Esophagus muscularis mucosa (tissue), 4 donors: ENCODE measurements at regions of chr1 and their contacts with region 1.

Region 1: GRCh38 chr1:43073490-43074230 is 98.4 kb downstream of the EBNA1BP2 start:
- DNase-seq: no peak
- H3K4me3 ChIP-seq: no peak overlapping the region
- H3K27ac ChIP-seq: no peak overlapping the region
- H3K4me1 ChIP-seq: peaks cover under 1 to 16% (median 4%) of the 10 kb centered on the region in 4 donors
- H3K27me3 ChIP-seq: peaks cover 0 to under 1% (median 0%) of the 10 kb centered on the region in 4 donors
- CTCF ChIP-seq: peak; percentile 85 to 94 (median 91)
- EP300 ChIP-seq: no peak
- POLR2A ChIP-seq: no peak

Region 2: DNA sequence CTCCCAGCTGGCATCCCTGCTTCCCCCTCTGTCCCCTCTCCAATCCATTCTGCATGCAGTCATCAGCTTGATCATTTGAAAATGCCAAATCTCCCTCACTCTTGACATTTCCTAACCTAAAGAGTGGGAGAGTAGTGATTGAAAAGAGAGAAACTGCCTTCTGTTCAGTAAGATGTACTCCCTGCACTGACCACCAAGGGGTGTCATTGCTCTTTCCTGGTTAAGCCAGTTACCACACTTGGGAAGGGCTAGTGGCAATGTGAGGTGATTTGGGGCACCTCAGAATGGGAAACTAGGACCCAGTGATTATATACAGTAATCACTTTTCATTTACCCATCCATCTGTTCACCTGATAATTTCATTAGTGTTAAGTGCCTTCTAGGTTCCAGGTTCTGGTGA is 295.8 kb before region 1 on chr1:
- intact Hi-C with region 1: loop called (anchors 5 kb)
- DNase-seq: no peak
- H3K4me3 ChIP-seq: no peak overlapping the region
- H3K27ac ChIP-seq: no peak overlapping the region
- H3K4me1 ChIP-seq: no peaks in the 10 kb centered on the region
- H3K27me3 ChIP-seq: no peaks in the 10 kb centered on the region
- CTCF ChIP-seq: peak; percentile 41 to 56 (median 53)
- EP300 ChIP-seq: no peak
- POLR2A ChIP-seq: no peak

Region 3: DNA sequence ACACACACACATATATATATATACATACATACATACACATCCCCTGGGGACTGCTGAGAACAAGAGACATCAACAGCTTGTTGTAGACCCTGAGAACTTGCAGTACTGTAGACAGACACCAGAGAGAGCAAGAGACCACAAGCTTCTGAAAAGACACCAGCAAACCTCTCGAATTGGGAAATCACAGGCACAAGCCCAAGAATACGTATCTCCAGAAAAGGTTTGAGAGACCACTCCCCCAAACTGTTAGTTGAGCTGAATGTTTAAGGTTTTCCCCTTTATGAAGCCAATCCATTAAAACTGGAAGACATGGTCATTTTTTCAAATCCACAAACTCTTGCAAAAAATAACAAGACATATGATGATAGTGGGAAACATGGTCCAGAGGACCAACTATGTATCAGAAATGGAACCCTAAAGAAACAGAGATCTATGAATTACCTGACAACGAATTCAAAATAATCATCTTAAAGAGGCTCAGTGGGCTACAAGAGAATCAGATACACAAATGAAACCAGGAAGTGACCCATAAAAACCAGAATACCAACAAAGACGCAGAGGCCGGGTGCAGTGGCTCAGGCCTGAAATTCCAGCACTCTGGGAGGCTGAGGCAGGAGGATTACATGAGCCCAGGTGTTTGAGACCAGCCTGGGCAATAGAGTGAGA is 160.1 kb before region 1 on chr1:
- intact Hi-C with region 1: loop called (anchors 1 kb)
- DNase-seq: no peak
- H3K4me3 ChIP-seq: no peak overlapping the region
- H3K27ac ChIP-seq: no peak overlapping the region
- H3K4me1 ChIP-seq: no peaks in the 10 kb centered on the region
- H3K27me3 ChIP-seq: no peaks in the 10 kb centered on the region
- CTCF ChIP-seq: peak; percentile 79 to 95 (median 79)
- EP300 ChIP-seq: no peak
- POLR2A ChIP-seq: no peak

Region 4: GRCh38 chr1:43274125-43274803 is 200.6 kb after region 1 on chr1:
- intact Hi-C with region 1: no loop called
- DNase-seq: no peak
- H3K4me3 ChIP-seq: no peak overlapping the region
- H3K27ac ChIP-seq: no peak overlapping the region
- H3K4me1 ChIP-seq: peaks cover 0 to 10% (median 4%) of the 10 kb centered on the region in 4 donors
- H3K27me3 ChIP-seq: peaks cover 0 to 54% (median 11%) of the 10 kb centered on the region in 4 donors
- CTCF ChIP-seq: no peak
- EP300 ChIP-seq: no peak
- POLR2A ChIP-seq: no peak